ENCODE measurements at regions of chr15 and their contacts with region 1.

Region 1: GRCh38 chr15:64369078-64369607 is 12.1 kb downstream of the PCLAF start:
- DNase-seq: peak; percentile 11
- ATAC-seq: no peak
- H3K4me3 ChIP-seq: no peak overlapping the region
- H3K27ac ChIP-seq: no peak overlapping the region
- H3K4me1 ChIP-seq: no peaks in the 10 kb centered on the region
- H3K27me3 ChIP-seq: no peaks in the 10 kb centered on the region
- CTCF ChIP-seq: no peak
- POLR2A ChIP-seq: no peak
- RAD21 ChIP-seq: no peak

Region 2: DNA sequence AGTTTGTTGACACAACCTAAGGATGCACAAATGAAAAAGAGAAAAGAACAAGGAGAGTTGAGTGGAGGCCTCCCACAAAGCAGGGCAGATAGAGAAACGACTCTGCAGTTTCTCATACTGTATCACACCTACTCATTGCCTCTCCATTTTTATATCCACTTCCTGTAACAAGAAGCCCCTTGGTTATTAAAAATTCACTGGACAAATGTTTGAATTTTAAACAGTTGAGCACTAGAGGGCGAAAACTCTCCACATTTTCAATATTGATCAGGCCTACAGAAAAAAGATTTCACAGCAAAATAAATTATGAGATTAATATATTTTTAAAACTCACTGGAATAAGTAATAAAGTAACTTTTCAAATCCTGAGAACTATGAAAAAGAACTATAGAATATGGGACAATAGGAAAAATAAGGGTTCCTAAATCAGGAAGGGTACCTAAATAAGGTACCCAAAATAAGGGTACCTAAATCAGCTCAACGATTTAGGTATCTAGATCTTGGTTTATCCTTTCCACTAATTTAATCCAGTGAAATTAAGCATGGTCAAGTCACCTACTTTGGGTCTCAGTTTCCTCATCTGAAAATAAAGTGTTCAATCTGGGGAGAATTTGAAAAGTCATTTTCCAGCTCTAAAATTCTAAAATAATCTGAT is 159.3 kb before region 1 on chr15:
- CTCF ChIA-PET with region 1: no interaction called
- POLR2A ChIA-PET with region 1: no interaction called
- dilution Hi-C with region 1: no loop called
- in situ Hi-C with region 1: loop called (anchors 5 kb)
- intact Hi-C with region 1: no loop called
- DNase-seq: peak; percentile 64
- ATAC-seq: peak; percentile 70
- H3K4me3 ChIP-seq: no peak overlapping the region
- H3K27ac ChIP-seq: no peak overlapping the region
- H3K4me1 ChIP-seq: peaks cover 2% of the 10 kb centered on the region; the same call in 1 of the 2 replicates
- H3K27me3 ChIP-seq: no peaks in the 10 kb centered on the region
- CTCF ChIP-seq: peak; percentile 70
- POLR2A ChIP-seq: no peak
- RAD21 ChIP-seq: peak; percentile 69

Region 3: GRCh38 chr15:64263567-64263966 is 105.6 kb before region 1 on chr15:
- CTCF ChIA-PET with region 1: no interaction called
- POLR2A ChIA-PET with region 1: no interaction called
- dilution Hi-C with region 1: no loop called
- in situ Hi-C with region 1: no loop called
- intact Hi-C with region 1: no loop called
- DNase-seq: no peak
- ATAC-seq: no peak
- H3K4me3 ChIP-seq: no peak overlapping the region
- H3K27ac ChIP-seq: no peak overlapping the region
- H3K4me1 ChIP-seq: no peaks in the 10 kb centered on the region
- H3K27me3 ChIP-seq: no peaks in the 10 kb centered on the region
- CTCF ChIP-seq: no peak
- POLR2A ChIP-seq: no peak
- RAD21 ChIP-seq: no peak

Region 4: DNA sequence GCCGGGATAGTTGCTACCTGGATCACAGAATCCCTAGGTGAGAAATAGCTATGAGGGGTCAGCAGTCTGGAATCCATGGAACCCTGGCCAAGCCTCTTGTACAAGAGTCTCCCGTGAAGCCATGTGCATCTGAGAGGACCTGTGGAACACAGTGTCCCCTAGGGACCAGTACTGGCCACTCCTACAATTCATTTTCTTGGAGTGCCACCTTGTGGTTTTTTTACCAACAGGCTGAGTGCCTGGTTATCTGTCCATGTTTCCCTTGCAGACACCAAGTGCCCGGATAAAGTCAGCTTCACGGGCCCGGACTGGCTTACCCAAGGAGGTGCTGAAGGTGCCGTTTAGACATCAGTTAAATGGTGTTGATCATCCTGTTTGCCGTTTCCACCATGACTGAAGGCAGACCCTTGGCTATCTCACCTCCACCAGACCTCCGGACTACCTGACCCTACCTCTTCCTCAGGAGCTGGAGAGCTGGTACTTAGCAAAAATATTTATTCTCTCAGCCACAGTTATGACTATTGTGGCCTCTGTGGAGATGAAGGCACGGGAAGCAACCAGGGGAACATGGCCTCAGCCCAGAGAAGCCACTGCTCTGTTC is 312.4 kb after region 1 on chr15:
- CTCF ChIA-PET with region 1: no interaction called
- POLR2A ChIA-PET with region 1: no interaction called
- dilution Hi-C with region 1: no loop called
- in situ Hi-C with region 1: no loop called
- intact Hi-C with region 1: no loop called
- DNase-seq: peak; percentile 65
- ATAC-seq: peak; percentile 83
- H3K4me3 ChIP-seq: no peak overlapping the region
- H3K27ac ChIP-seq: no peak overlapping the region
- H3K4me1 ChIP-seq: peaks cover 3% of the 10 kb centered on the region; the same call in 1 of the 2 replicates
- H3K27me3 ChIP-seq: no peaks in the 10 kb centered on the region
- CTCF ChIP-seq: peak; percentile 92
- POLR2A ChIP-seq: no peak
- RAD21 ChIP-seq: peak; percentile 84

Region 5: DNA sequence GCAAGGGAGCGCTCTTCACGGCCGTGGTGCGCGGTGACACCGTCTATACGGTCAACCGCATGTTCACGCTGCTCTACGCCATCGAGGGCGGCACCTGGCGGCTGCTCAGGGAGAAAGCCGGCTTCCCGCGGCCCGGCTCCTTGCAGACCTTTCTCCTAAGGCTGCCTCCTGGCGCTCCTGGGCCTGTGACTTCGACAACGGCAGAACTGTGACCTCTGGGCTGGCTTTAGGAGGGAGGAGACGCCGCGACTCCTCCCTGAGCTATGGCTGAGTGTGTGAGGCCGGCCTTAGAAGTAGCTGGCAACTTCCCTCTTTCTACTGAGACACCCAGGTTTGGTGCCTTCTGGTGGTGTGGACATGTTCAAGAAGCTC is 708.8 kb after region 1 on chr15:
- CTCF ChIA-PET with region 1: no interaction called
- POLR2A ChIA-PET with region 1: no interaction called
- dilution Hi-C with region 1: no loop called
- in situ Hi-C with region 1: no loop called
- intact Hi-C with region 1: no loop called
- DNase-seq: no peak
- ATAC-seq: no peak
- H3K4me3 ChIP-seq: no peak overlapping the region
- H3K27ac ChIP-seq: no peak overlapping the region
- H3K4me1 ChIP-seq: peaks cover 5% of the 10 kb centered on the region; the same call in 1 of the 2 replicates
- H3K27me3 ChIP-seq: peaks cover 35% of the 10 kb centered on the region
- CTCF ChIP-seq: peak; percentile 13; the same call in 1 of the 2 replicates
- POLR2A ChIP-seq: no peak
- RAD21 ChIP-seq: peak; percentile 27; the same call in 1 of the 2 replicates

Measured in IMR-90 (cell line).